HepG2 (cell line): ENCODE measurements at regions of chr15 and their contacts with region 1.

Region 1: DNA sequence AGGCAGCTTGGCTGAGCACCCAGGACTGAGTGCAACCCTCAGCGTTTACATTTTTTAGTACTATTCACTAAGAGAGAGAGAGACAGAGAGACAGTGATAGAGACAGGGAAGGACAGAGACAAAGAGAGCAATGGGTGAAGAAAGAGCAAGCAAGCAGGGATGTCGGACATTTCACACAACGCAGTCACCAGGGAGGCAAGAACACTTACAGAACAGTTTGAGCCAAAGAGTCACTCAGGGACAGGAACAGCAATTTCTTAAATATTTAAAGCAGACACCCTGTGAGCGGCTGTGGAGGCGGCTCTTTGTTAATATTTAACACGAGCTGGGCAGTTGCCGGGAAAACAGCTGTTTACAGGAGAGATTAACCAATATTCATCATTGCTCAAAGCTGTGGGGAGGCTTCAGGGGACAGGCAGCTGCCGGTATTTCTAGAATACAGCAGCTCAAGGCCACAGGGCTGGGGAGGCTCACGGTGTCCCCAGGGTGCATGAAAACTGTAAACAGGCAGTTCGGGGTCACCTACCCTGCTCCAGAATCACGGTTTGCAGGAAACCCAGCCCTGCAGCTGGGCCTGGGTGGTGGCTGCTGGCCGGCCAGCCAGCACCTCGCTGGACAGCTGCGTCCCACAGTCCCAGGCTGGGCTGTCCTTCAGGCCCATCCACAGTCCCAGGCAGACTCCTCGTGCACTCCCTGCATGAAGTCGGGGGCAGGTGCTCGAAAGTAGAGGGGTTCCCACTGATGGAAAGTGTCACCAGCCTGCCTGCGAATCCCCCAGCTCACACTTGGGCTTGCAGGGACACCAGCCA is 38.8 kb upstream of the PCSK6 start:
- DNase-seq: peak; percentile 97
- ATAC-seq: peak; percentile 91
- H3K4me3 ChIP-seq: peak overlapping the region; percentile 39 to 74 (median 54); a peak in 5 of 6 replicates
- H3K27ac ChIP-seq: peak overlapping the region; percentile 98
- H3K4me1 ChIP-seq: peaks cover 90% of the 10 kb centered on the region
- H3K27me3 ChIP-seq: no peaks in the 10 kb centered on the region
- CTCF ChIP-seq: no peak
- EP300 ChIP-seq: peak in 1 of 2 experiments; percentile 97; a peak in 2 of 4 replicates
- POLR2A ChIP-seq: peak; percentile 61 to 65; a peak in 3 of 4 replicates
- RAD21 ChIP-seq: no peak; the same call in none of the 2 replicates

Region 2: DNA sequence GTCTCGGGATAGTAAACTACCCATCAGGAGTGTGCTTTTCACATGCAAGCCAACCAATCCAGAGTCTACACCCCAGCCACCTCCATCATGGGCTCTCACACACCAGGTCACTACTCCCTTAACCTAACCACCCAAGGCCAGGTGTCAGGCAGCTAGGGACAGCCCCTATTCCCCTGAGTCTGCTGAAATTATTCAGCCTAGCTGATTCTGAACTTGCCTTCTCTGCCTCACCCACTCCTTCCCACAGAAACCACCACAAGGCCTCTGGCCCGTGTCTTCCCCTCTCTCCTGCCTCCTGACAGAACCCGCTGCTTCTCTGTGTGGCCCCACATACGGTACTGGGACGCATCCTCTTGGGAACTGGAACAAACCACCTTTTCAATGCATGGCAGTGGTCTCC is 120.9 kb before region 1 on chr15:
- CTCF ChIA-PET with region 1: no interaction called
- POLR2A ChIA-PET with region 1: no interaction called
- in situ Hi-C with region 1: no loop called
- intact Hi-C with region 1: no loop called
- DNase-seq: no peak
- ATAC-seq: no peak
- H3K4me3 ChIP-seq: no peak overlapping the region
- H3K27ac ChIP-seq: no peak overlapping the region
- H3K4me1 ChIP-seq: no peaks in the 10 kb centered on the region
- H3K27me3 ChIP-seq: no peaks in the 10 kb centered on the region
- CTCF ChIP-seq: no peak
- EP300 ChIP-seq: no peak
- POLR2A ChIP-seq: no peak
- RAD21 ChIP-seq: no peak

Region 3: GRCh38 chr15:101439285-101439919 is 88.9 kb before region 1 on chr15:
- CTCF ChIA-PET with region 1: no interaction called
- POLR2A ChIA-PET with region 1: interaction called, 71 read pairs
- in situ Hi-C with region 1: no loop called
- intact Hi-C with region 1: no loop called
- DNase-seq: peak; percentile 99
- ATAC-seq: peak; percentile 96
- H3K4me3 ChIP-seq: peak overlapping the region in 2 of 3 experiments; percentile 14 to 46; a peak in 2 of 6 replicates
- H3K27ac ChIP-seq: peak overlapping the region; percentile 93
- H3K4me1 ChIP-seq: peaks cover 77% of the 10 kb centered on the region
- H3K27me3 ChIP-seq: no peaks in the 10 kb centered on the region
- CTCF ChIP-seq: peak; percentile 79
- EP300 ChIP-seq: peak; percentile 88 to 99
- POLR2A ChIP-seq: peak; percentile 39 to 75; a peak in 3 of 4 replicates
- RAD21 ChIP-seq: peak; percentile 64

Region 4: GRCh38 chr15:101489236-101489632 is 39.1 kb before region 1 on chr15:
- CTCF ChIA-PET with region 1: no interaction called
- POLR2A ChIA-PET with region 1: interaction called, 43 read pairs
- in situ Hi-C with region 1: no loop called
- intact Hi-C with region 1: no loop called
- DNase-seq: no peak
- ATAC-seq: peak; percentile 43
- H3K4me3 ChIP-seq: peak overlapping the region; percentile 62 to 83 (median 83); a peak in 4 of 6 replicates
- H3K27ac ChIP-seq: no peak overlapping the region
- H3K4me1 ChIP-seq: peaks cover 44% of the 10 kb centered on the region
- H3K27me3 ChIP-seq: no peaks in the 10 kb centered on the region
- CTCF ChIP-seq: peak; percentile 33; the same call in 1 of the 2 replicates
- EP300 ChIP-seq: no peak
- POLR2A ChIP-seq: no peak
- RAD21 ChIP-seq: peak; percentile 25

Region 5: GRCh38 chr15:101510212-101511197 is 17.8 kb before region 1 on chr15:
- CTCF ChIA-PET with region 1: no interaction called
- POLR2A ChIA-PET with region 1: interaction called, 13 read pairs
- in situ Hi-C with region 1: no loop called
- intact Hi-C with region 1: no loop called
- DNase-seq: no peak
- ATAC-seq: no peak
- H3K4me3 ChIP-seq: no peak overlapping the region
- H3K27ac ChIP-seq: no peak overlapping the region
- H3K4me1 ChIP-seq: peaks cover 27% of the 10 kb centered on the region
- H3K27me3 ChIP-seq: no peaks in the 10 kb centered on the region
- CTCF ChIP-seq: no peak
- EP300 ChIP-seq: no peak
- POLR2A ChIP-seq: no peak
- RAD21 ChIP-seq: no peak

Region 6: DNA sequence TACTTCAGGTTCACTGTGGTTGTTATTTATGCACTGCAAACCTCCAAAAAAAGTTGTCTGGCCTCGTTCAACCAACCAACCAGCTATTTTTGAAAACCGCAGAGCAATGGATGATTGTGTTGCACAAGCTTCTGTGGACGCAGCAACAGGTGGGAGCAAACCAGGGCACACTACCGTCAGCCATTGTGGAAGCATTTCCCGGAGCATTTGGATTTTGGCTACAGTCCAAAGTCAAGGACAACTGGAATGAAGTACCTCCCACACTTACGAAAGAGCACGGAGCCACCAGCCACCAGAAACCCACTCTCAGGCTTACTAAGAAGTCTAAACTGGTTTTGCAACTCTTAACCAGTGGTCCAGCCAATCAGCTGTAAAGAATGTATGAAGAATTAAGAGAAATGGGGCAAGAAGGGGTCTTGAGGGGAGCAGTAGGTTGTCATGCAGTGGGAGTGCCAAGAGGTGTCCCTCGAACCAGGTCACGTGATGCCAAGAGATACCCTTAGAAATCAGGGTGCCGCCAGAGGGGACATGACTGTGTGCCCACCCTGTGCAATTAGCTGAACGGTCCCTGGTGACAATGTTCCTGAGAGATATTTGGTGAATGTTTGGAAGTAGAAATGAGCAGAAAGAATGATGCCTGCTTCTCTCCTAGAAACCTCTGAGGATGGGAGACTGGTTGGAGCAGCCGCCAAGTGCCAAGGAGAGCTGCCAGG is 30.1 kb after region 1 on chr15:
- CTCF ChIA-PET with region 1: no interaction called
- POLR2A ChIA-PET with region 1: interaction called, 12 read pairs
- in situ Hi-C with region 1: no loop called
- intact Hi-C with region 1: no loop called
- DNase-seq: peak; percentile 83
- ATAC-seq: peak; percentile 69
- H3K4me3 ChIP-seq: peak overlapping the region in 2 of 3 experiments; percentile 36 to 48; a peak in 4 of 6 replicates
- H3K27ac ChIP-seq: peak overlapping the region; percentile 47
- H3K4me1 ChIP-seq: peaks cover 31% of the 10 kb centered on the region
- H3K27me3 ChIP-seq: 0 out of 5 replicates have a peak, but pooled peaks cover 0 to 1% of the 10 kb centered on the region in 2 experiments
- CTCF ChIP-seq: no peak
- EP300 ChIP-seq: peak in 1 of 2 experiments; percentile 27; a peak in 1 of 4 replicates
- POLR2A ChIP-seq: no peak
- RAD21 ChIP-seq: no peak

Region 7: GRCh38 chr15:101568821-101569555 is 40.7 kb after region 1 on chr15:
- CTCF ChIA-PET with region 1: no interaction called
- POLR2A ChIA-PET with region 1: no interaction called
- in situ Hi-C with region 1: no loop called
- intact Hi-C with region 1: no loop called
- DNase-seq: no peak
- ATAC-seq: peak; percentile 44; the same call in 1 of the 3 replicates
- H3K4me3 ChIP-seq: peak overlapping the region in 1 of 3 experiments; percentile 36; a peak in 1 of 6 replicates
- H3K27ac ChIP-seq: no peak overlapping the region
- H3K4me1 ChIP-seq: peaks cover 10% of the 10 kb centered on the region
- H3K27me3 ChIP-seq: peaks cover 0 to 10% of the 10 kb centered on the region in 2 experiments; a peak in 1 of 5 replicates
- CTCF ChIP-seq: no peak
- EP300 ChIP-seq: no peak
- POLR2A ChIP-seq: no peak
- RAD21 ChIP-seq: no peak

Region 8: GRCh38 chr15:101625980-101626379 is 97.7 kb after region 1 on chr15:
- CTCF ChIA-PET with region 1: no interaction called
- POLR2A ChIA-PET with region 1: interaction called, 10 read pairs
- in situ Hi-C with region 1: no loop called
- intact Hi-C with region 1: no loop called
- DNase-seq: no peak
- ATAC-seq: peak; percentile 69
- H3K4me3 ChIP-seq: peak overlapping the region; percentile 63
- H3K27ac ChIP-seq: peak overlapping the region; percentile 50
- H3K4me1 ChIP-seq: peaks cover 33% of the 10 kb centered on the region
- H3K27me3 ChIP-seq: no peaks in the 10 kb centered on the region
- CTCF ChIP-seq: no peak
- EP300 ChIP-seq: no peak
- POLR2A ChIP-seq: no peak
- RAD21 ChIP-seq: no peak